ENCODE measurements at regions of chr1 and their contacts with region 1.

Region 1: DNA sequence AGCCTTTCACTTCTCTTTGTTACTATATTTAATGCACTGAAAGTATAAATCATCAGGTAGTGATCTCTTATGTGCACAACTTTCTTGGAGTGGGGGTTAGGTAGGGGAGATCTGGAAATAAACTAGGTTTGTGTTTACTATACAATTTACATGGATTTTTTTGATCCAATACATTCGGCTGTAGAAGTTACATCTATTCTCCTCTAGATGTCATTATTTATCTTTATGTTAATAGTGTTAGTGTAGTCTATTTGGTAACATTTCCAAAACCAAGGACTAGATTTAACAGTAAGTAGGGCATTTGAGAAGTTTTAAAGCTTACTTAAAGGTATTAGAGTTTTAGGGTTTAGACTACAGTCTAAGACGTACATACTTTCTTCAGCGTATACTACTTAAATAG is 5.4 kb downstream of the VPS45 start:
- DNase-seq: no peak

Region 2: GRCh38 chr1:149886396-149887195 is 186.4 kb before region 1 on chr1:
- intact Hi-C with region 1: no loop called
- DNase-seq: peak; percentile 74 to 98 (median 84)

Region 3: GRCh38 chr1:150168960-150169601 is 96.1 kb after region 1 on chr1:
- intact Hi-C with region 1: loop called (anchors 5 kb)
- DNase-seq: peak in 7 of 10 donors; percentile 36 to 91 (median 58)

Region 4: DNA sequence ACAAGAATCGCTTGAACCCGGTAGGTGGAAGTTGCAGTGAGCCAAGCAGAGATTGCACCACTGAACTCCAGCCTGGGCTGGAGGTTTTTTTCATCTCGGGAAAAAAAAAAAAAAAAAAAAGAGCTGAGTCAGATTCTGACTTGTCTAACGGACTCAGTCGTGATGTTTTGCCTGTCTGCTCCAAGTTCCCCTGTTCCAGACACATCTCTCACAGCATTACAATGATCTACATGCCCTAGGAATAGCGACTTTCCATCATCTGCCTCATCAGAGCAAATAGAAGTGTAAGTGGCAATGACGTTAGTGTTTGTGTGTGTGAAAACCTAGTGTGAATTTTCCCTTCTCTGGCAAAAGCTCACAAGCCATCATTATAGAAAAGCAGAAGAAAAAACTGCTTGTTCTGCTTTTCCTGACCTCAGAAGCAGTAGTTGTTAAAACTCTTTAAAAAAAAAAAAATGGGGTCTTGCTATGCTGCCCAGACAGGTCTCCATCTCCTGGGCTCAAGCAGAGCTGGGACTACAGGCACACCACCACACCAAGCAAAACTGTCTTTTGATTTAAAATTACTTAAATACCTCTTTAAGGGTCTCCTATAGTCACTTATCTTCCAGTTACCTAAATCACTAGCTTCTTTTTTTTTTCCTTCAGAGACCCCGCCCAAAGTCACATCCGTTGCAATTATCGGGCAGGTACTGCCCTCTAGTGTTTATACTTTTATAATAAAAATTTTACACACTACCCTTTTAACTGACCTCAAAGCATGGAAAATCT is 114.0 kb after region 1 on chr1:
- intact Hi-C with region 1: loop called (anchors 5 kb)
- DNase-seq: no peak

Region 5: GRCh38 chr1:150293433-150294168 is 220.6 kb after region 1 on chr1 and contains the start of gene MRPS21:
- intact Hi-C with region 1: no loop called
- DNase-seq: peak; percentile 80 to 98 (median 92)